Activated naive CD8-positive, alpha-beta T cell treated with anti-CD3 and anti-CD28 coated beads, Interleukin-2, amount 10 ng/mL, durations not matched to agents 7 days and 5 days (primary cell): ENCODE measurements at regions of chr16 and their contacts with region 1.

Region 1: DNA sequence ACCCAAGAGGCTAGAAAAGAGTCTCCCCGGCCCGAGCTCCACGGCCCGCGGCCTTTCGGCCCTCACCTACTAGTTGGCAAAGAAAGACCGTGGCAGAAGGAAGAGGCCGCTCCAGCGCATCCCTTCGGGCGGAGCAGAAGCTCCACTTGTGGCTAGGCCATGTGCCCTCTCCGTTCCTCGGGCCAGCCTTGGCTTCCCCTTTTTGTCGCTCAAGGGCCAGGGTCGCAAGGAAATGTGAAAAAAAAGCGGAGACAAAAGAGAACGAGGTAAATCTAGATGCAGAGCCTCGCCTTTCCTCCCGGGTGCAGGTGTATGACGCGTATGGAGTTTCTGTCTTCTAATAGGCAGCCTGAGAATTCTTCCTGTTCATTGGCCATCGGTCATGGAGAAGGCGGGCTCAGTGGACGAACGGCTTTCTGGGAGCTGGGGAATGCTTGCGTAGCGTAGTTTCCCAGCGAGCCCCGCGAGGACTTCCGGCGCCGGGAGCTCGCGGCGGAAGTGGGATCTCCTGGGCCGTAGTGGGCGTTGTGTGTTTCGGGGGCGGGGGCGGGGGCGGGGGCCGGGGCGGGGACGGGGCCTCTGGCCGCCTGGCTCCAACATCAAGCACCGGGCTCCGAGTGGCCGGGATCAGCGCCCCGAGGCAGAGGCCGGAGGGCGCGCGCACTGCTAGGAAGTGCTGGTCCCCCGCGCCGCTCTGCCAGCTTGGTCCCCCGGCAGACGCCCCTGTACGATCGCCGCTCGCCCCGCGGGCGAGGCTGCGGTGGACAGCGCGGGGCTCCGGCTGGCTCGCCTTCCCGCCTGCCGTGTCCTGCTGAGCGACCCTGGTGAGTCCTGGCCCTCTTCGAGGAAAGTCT is at the start of gene ZNF213:
- DNase-seq: peak; percentile 87
- ATAC-seq: peak; percentile 95
- H3K4me3 Mint-ChIP-seq: peak within 1 kb of the TSS; percentile 99
- H3K27ac Mint-ChIP-seq: peak within 1 kb of the TSS; percentile 95
- H3K4me1 Mint-ChIP-seq: peaks cover 23% of the 10 kb centered on the region
- H3K27me3 Mint-ChIP-seq: no peaks in the 10 kb centered on the region
- total RNA-seq, gene ZNF213: 12.9 to 13.3 TPM

Region 2: GRCh38 chr16:3045357-3045728 is 89.4 kb before region 1 on chr16:
- POLR2A ChIA-PET with region 1: interaction called, 13 read pairs
- DNase-seq: no peak
- ATAC-seq: peak; percentile 45
- H3K4me3 Mint-ChIP-seq: peak overlapping the region; percentile 77
- H3K27ac Mint-ChIP-seq: peak overlapping the region; percentile 83
- H3K4me1 Mint-ChIP-seq: peaks cover 23% of the 10 kb centered on the region
- H3K27me3 Mint-ChIP-seq: peaks cover 35% of the 10 kb centered on the region

Region 3: GRCh38 chr16:3099732-3100499 is 34.9 kb before region 1 on chr16:
- POLR2A ChIA-PET with region 1: interaction called, 27 read pairs
- DNase-seq: peak; percentile 94
- ATAC-seq: peak; percentile 82
- H3K4me3 Mint-ChIP-seq: peak overlapping the region; percentile 89
- H3K27ac Mint-ChIP-seq: peak overlapping the region; percentile 90
- H3K4me1 Mint-ChIP-seq: peaks cover 29% of the 10 kb centered on the region
- H3K27me3 Mint-ChIP-seq: peaks cover 2% of the 10 kb centered on the region

Region 4: GRCh38 chr16:3150346-3151218 is 15.8 kb after region 1 on chr16:
- POLR2A ChIA-PET with region 1: interaction called, 42 read pairs
- DNase-seq: peak; percentile 99
- ATAC-seq: peak; percentile 84
- H3K4me3 Mint-ChIP-seq: peak overlapping the region; percentile 88
- H3K27ac Mint-ChIP-seq: peak overlapping the region; percentile 89
- H3K4me1 Mint-ChIP-seq: peaks cover 24% of the 10 kb centered on the region
- H3K27me3 Mint-ChIP-seq: peaks cover 4% of the 10 kb centered on the region

Region 5: GRCh38 chr16:3158471-3159314 is 23.9 kb after region 1 on chr16:
- POLR2A ChIA-PET with region 1: interaction called, 14 read pairs
- DNase-seq: peak; percentile 90
- ATAC-seq: peak; percentile 82
- H3K4me3 Mint-ChIP-seq: peak overlapping the region; percentile 84
- H3K27ac Mint-ChIP-seq: peak overlapping the region; percentile 92
- H3K4me1 Mint-ChIP-seq: peaks cover 30% of the 10 kb centered on the region
- H3K27me3 Mint-ChIP-seq: peaks cover 11% of the 10 kb centered on the region

Region 6: DNA sequence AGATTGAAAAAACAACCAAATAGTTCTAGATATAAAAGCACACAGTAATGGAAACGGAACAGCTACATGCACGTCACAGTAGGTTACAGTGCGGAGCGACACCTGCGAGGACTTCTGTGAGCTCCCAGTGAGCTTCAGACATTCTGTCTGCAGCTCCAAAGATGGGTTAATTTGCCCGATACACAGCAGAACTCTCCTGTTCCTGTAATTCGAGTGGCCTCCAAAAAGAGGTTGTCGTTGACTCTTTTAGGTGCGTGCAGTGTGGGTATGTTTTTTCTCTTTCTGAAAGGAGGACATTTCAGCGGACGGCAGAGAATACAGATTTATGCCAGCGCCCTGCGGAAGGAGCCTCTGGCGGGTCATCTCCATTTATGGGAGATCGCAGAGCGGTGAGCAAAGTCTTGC is 56.2 kb after region 1 on chr16:
- POLR2A ChIA-PET with region 1: no interaction called
- DNase-seq: no peak
- ATAC-seq: no peak
- H3K4me3 Mint-ChIP-seq: peak overlapping the region; percentile 46
- H3K27ac Mint-ChIP-seq: peak overlapping the region; percentile 7
- H3K4me1 Mint-ChIP-seq: peaks cover 34% of the 10 kb centered on the region
- H3K27me3 Mint-ChIP-seq: peaks cover 77% of the 10 kb centered on the region